ENCODE measurements at regions of chr11 and their contacts with region 1.

Region 1: GRCh38 chr11:118198370-118198769 is 21.9 kb upstream of the SCN2B start:
- H3K4me3 Mint-ChIP-seq: no peak overlapping the region
- H3K27ac Mint-ChIP-seq: peak overlapping the region; percentile 57
- H3K4me1 Mint-ChIP-seq: peaks cover 26% of the 10 kb centered on the region
- H3K27me3 Mint-ChIP-seq: no peaks in the 10 kb centered on the region

Region 2: DNA sequence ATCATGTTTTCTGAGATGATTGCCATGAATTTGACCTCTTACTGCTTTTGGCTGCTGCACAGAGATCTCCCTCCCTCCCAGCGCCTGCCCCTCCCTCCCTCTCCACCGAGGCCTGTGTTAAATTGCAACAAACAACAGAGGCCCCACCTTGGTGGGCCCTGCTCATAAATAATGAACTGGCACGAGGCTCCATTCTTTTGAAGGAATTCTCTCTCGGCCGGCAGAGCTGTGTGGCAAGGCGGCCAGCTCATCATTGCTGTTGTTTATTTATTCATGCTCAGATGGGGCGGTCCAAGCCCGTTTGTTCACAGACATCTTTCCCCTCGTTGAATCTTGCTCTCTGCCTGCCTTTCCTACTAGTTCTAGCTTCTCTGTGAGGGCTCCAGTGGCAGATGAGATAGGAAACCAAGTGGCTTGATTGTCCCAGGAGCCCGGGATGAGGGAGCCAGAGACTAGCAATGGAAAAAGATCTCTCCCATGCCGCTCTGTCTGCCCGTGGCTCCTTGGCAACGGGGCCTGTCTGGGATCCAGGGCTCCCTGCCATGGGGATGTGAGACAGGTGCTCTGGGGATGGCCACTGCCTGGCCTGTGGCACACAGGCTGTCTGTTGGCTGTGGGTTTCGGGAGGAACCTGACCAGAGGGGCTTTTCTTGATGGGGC is 593.9 kb before region 1 on chr11:
- intact Hi-C with region 1: no loop called
- H3K4me3 Mint-ChIP-seq: no peak overlapping the region
- H3K27ac Mint-ChIP-seq: no peak overlapping the region
- H3K4me1 Mint-ChIP-seq: no peaks in the 10 kb centered on the region
- H3K27me3 Mint-ChIP-seq: peaks cover 22% of the 10 kb centered on the region

Region 3: DNA sequence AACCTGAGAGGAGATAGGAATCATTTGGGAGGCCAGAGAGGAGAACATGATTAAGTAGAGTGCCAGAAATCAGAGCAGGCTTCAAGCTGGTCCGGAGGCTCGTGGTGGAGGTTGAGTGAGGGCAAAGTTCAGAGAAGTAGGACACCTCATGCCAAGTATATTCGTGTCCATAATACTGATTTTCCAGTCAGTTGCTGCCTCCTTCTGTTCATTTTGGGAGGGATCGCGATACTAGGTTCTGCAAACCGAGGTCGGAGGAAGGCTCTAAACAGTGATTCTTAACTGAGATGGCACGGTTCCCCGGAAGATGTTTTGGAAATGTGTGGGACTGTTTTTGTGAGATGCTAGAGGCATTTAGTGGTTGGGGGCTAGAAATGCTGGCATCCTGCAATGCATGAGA is 92.6 kb after region 1 on chr11:
- intact Hi-C with region 1: loop called (anchors 1 kb)
- H3K4me3 Mint-ChIP-seq: no peak overlapping the region
- H3K27ac Mint-ChIP-seq: peak overlapping the region; percentile 21
- H3K4me1 Mint-ChIP-seq: peaks cover 37% of the 10 kb centered on the region
- H3K27me3 Mint-ChIP-seq: no peaks in the 10 kb centered on the region

Measured in dendritic cell treated with granulocyte-macrophage colony-stimulating factor and Interleukin-4, amounts not matched to agents 40 ng/mL and 50 ng/mL, for 4 days (primary cell).